GM12878 (cell line): ENCODE measurements at regions of chr20 and their contacts with region 1.

Region 1: DNA sequence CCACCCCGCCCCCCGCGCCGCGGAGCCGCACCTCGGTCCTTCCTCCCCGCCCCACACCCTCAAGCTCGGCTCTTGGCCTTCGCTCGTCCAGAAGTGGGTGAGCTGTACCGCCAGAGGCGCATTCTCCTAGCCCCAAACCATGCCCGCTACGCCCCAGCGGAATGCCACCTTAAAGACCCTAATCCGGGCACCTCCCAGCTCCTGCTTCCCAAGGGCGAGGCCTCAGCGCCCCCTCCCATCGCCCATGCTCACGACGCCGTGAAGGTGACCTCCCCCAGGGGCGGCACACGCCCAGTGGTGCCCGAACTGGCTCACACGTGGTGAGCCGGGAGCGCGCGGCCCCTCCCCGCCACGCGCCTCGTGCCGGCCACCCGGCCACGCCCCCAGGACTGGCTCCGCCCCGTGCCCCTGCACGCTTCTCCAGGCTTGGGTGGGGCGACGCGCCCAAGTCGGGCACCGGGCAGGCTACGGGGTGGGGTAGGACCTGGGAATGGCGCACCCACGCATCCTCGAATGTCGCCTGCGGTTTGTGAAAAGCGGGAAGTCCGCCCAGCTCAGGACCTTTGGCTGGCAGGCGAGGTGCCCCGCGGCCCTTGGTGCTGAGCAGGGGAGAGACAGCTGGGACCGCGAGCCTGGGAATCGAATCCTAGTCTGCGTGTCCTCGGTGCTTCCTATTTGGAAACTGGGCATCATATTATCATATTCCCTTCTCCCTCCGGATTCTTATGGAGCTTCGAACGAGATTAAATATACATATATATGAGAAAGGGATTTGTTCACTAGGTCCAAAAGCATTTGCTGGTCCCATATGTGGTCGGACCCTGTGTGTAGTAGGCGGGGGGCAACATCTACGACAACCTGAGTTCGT is 941 bp upstream of the SOX12 start:
- DNase-seq: no peak
- ATAC-seq: peak; percentile 83
- H3K4me3 ChIP-seq: peak overlapping the region; percentile 87
- H3K27ac ChIP-seq: peak overlapping the region; percentile 88
- H3K4me1 ChIP-seq: peaks cover 4% of the 10 kb centered on the region
- H3K27me3 ChIP-seq: no peaks in the 10 kb centered on the region
- CTCF ChIP-seq: peak; percentile 18 to 43 (median 30); a peak in 5 of 6 replicates
- EP300 ChIP-seq: no peak
- POLR2A ChIP-seq: peak; percentile 84
- RAD21 ChIP-seq: no peak

Region 2: DNA sequence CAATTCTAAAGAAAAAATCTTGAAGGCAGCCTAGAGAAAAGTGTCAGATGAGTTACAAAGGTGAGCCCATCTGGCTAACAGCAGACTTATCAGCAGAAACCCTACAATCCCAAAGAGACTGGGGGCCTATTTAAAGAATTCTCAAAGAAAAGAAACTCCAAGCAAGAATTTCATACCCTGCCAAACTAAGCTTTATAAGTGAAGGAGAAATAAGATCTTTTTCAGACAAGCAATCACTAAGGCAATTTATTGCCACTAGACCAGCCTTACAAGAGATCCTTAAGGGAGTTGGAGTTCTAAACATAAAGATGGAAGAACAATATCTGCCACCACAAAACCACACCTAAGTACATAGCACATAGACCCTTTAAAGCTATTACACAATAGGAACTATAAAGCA is 206.9 kb before region 1 on chr20:
- CTCF ChIA-PET with region 1: no interaction called
- POLR2A ChIA-PET with region 1: no interaction called
- RAD21 ChIA-PET with region 1: no interaction called
- SMC1A ChIA-PET with region 1: no interaction called
- in situ Hi-C with region 1: no loop called
- intact Hi-C with region 1: no loop called
- DNase-seq: no peak
- ATAC-seq: no peak
- H3K4me3 ChIP-seq: no peak overlapping the region
- H3K27ac ChIP-seq: no peak overlapping the region
- H3K4me1 ChIP-seq: no peaks in the 10 kb centered on the region
- H3K27me3 ChIP-seq: no peaks in the 10 kb centered on the region
- CTCF ChIP-seq: no peak
- EP300 ChIP-seq: no peak
- POLR2A ChIP-seq: no peak
- RAD21 ChIP-seq: no peak

Region 3: DNA sequence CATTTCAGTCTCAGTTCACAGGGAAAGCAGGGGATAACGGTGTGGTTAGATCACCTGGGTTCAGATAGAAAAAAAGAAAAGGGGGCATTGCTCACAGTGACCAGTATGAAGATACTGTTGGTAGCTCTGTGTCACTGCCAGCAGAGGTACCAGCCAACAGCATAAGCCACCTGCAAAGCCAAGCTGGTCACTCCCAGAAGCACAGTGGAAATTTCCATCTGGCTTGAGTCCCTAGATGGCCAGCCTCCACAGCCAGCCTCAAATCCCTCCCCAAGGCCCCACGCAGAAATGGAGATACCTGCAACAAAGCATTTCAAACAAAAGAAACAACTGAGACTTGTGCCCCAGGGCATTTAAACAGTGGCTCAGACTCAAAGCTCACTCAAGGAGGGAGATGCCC is 155.5 kb before region 1 on chr20:
- CTCF ChIA-PET with region 1: no interaction called
- POLR2A ChIA-PET with region 1: no interaction called
- RAD21 ChIA-PET with region 1: no interaction called
- SMC1A ChIA-PET with region 1: no interaction called
- in situ Hi-C with region 1: no loop called
- intact Hi-C with region 1: no loop called
- DNase-seq: no peak
- ATAC-seq: no peak
- H3K4me3 ChIP-seq: no peak overlapping the region
- H3K27ac ChIP-seq: no peak overlapping the region
- H3K4me1 ChIP-seq: no peaks in the 10 kb centered on the region
- H3K27me3 ChIP-seq: no peaks in the 10 kb centered on the region; a peak in 1 of 4 replicates
- CTCF ChIP-seq: no peak
- EP300 ChIP-seq: no peak
- POLR2A ChIP-seq: no peak
- RAD21 ChIP-seq: no peak

Region 4: DNA sequence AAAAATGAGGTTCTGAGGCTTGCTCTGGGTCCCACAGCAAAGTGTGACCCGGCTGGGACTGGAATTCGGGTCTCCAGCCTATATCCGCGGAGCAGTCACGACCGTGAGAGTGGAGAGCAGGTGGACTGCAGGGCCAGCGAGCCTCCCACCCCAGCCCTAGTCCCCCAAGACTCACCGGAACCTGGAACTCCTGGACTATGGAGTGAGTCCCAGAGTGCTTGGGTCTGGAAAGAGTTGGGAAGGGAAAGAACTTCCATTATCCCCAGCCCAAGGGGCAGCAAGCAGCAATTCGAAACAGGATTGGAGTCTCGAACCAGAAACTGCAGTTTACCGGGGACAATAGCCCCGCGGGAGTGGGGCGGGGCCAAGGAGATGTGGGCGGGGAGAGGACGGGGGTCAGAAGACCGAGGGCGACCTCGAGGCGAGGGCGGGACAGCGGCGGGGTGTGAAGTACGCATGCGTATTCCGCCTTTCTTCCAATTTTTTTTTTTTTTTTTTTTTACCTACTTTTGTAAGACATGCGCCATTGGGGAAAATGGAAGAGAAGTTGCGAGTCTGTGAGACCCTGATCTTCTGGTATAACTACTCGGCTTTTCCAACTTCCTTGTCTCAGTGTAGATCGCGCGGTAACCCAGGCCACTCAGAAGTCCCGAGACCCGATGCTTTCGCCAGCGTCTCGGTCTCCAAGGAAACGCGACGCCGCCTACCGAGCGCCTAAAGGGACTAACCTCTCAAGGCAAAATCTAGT is 34.2 kb before region 1 on chr20 and contains the start of gene C20orf96:
- CTCF ChIA-PET with region 1: no interaction called
- POLR2A ChIA-PET with region 1: interaction called, 3 read pairs
- RAD21 ChIA-PET with region 1: no interaction called
- SMC1A ChIA-PET with region 1: no interaction called
- in situ Hi-C with region 1: no loop called
- intact Hi-C with region 1: loop called (anchors 1 kb)
- DNase-seq: peak; percentile 87
- ATAC-seq: peak; percentile 99
- H3K4me3 ChIP-seq: peak within 1 kb of the TSS; percentile 91
- H3K27ac ChIP-seq: peak within 1 kb of the TSS; percentile 83
- H3K4me1 ChIP-seq: peaks cover 13% of the 10 kb centered on the region
- H3K27me3 ChIP-seq: no peaks in the 10 kb centered on the region
- CTCF ChIP-seq: peak in 2 of 3 experiments; percentile 17 to 37; a peak in 2 of 6 replicates
- EP300 ChIP-seq: no peak
- POLR2A ChIP-seq: 0 out of 2 replicates have a peak, but pooled peaks have one; percentile 29
- RAD21 ChIP-seq: no peak
- polyA plus RNA-seq, gene C20orf96: 2.3 to 2.4 TPM

Region 5: DNA sequence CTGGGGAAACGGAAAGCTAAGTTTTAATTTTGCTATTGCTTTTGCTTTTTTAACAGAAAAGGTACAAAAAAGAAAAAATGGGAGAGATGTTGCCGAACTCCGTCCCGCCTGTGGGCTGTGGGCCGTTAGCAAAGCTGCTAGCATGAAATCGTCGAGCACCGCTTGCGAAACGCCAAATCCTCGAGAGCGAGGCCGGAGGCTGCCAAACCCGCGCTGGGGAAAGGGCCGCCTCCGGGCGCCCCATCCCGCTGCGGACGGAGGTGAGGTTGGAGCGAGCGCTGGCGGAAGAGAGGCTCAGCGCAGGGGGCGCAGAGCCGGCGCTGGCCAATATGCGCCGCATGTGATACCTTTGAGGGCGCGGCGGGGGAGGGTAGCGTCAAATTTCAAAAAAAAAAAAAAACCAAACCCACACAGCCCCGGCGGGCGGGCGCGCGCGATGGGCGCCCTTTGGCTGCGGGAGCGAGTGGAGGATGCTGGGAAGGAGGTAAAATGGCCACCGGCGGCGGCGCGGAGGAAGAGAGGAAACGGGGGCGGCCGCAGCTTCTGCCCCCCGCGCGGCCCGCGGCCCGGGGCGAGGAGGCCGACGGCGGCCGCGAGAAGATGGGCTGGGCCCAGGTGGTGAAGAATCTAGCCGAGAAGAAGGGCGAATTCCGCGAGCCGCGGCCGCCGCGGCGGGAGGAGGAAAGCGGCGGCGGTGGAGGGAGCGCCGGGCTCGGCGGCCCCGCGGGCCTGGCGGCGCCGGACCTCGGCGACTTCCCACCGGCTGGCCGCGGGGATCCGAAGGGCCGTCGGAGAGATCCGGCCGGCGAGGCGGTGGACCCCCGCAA is 27.1 kb before region 1 on chr20 and contains the start of gene ZCCHC3:
- CTCF ChIA-PET with region 1: interaction called, 15 read pairs
- POLR2A ChIA-PET with region 1: interaction called, 30 read pairs
- RAD21 ChIA-PET with region 1: interaction called, 11 read pairs
- SMC1A ChIA-PET with region 1: interaction called, 15 read pairs
- in situ Hi-C with region 1: no loop called
- intact Hi-C with region 1: loop called (anchors 1 kb)
- DNase-seq: peak; percentile 59
- ATAC-seq: peak; percentile 86
- H3K4me3 ChIP-seq: peak within 1 kb of the TSS; percentile 94
- H3K27ac ChIP-seq: peak within 1 kb of the TSS; percentile 90
- H3K4me1 ChIP-seq: peaks cover 25% of the 10 kb centered on the region
- H3K27me3 ChIP-seq: no peaks in the 10 kb centered on the region
- CTCF ChIP-seq: peak; percentile 21 to 23 (median 23); a peak in 2 of 6 replicates
- EP300 ChIP-seq: no peak
- POLR2A ChIP-seq: peak; percentile 83
- RAD21 ChIP-seq: no peak
- polyA plus RNA-seq, gene ZCCHC3: 5.3 to 10.8 TPM

Region 6: GRCh38 chr20:309841-310644 is 14.4 kb before region 1 on chr20:
- CTCF ChIA-PET with region 1: interaction called, 6 read pairs
- POLR2A ChIA-PET with region 1: interaction called, 11 read pairs
- RAD21 ChIA-PET with region 1: interaction called, 3 read pairs
- SMC1A ChIA-PET with region 1: interaction called, 5 read pairs
- in situ Hi-C with region 1: no loop called
- intact Hi-C with region 1: no loop called
- DNase-seq: no peak
- ATAC-seq: peak; percentile 100
- H3K4me3 ChIP-seq: peak overlapping the region; percentile 46
- H3K27ac ChIP-seq: no peak overlapping the region; the same call in 1 of the 2 replicates
- H3K4me1 ChIP-seq: peaks cover 4% of the 10 kb centered on the region; the same call in 1 of the 2 replicates
- H3K27me3 ChIP-seq: no peaks in the 10 kb centered on the region
- CTCF ChIP-seq: no peak
- EP300 ChIP-seq: no peak
- POLR2A ChIP-seq: no peak
- RAD21 ChIP-seq: no peak